Heart right ventricle (tissue), 16 donors: ENCODE measurements at regions of chr5 and their contacts with region 1.

Region 1: GRCh38 chr5:172283020-172283861 is at the start of gene UBTD2:
- DNase-seq: peak; percentile 86 to 89
- ATAC-seq: peak; percentile 73 to 92 (median 87)
- H3K4me3 ChIP-seq: peak within 1 kb of the TSS; percentile 56 to 97 (median 92)
- H3K27ac ChIP-seq: peak within 1 kb of the TSS; percentile 84 to 96 (median 94)
- H3K4me1 ChIP-seq: peaks cover 0 to 42% (median 24%) of the 10 kb centered on the region in 9 donors
- H3K27me3 ChIP-seq: no peaks in the 10 kb centered on the region
- CTCF ChIP-seq: peak; percentile 25 to 70 (median 56)
- total RNA-seq, gene UBTD2: 7.5 to 11.3 (median 9.1) TPM

Region 2: DNA sequence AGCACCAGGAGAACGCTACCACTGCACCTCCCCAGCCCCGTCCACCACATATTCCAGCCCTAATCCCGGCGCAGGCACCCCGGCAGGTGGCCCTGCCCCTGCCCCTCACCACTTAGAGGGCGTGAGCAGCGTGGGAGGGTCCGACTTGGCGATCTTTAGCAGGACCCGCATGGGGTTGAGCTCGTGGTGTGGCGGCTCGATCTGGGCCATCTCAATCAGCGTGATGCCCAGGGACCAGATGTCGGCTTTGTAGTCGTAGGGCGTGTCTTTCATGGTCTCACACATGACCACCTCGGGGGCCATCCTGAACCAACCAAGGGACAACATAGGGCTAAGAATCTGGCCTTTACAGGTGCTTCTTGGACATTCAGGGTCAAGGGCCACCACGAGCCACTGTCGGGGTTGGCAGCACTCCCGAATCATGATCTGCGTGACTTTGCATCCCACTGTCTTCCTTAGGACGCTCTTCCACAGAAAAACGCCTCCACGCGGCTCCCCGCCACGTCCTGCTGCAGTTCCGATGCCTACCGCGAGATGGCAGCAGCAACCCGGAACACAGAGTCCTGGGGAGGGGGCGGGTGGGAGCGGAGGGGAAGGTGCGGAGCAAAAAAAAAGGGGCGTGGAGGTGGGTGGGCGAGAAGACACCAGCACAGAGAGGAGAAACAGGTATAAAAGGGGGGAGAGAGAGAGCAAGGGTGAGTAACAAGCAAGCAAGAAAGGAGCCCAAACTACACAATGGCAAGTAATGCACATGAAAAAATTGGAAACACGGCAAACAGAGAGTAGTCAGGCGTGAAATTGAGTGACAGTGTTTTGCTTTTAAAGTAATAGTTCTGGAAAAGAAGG is 176.5 kb before region 1 on chr5:
- intact Hi-C with region 1: loop called in 4 of 10 experiments (anchors 2 to 5 kb)
- DNase-seq: peak in 1 of 2 donors; percentile 72
- ATAC-seq: peak in 6 of 8 donors; percentile 28 to 46 (median 38)
- H3K4me3 ChIP-seq: peak overlapping the region in 7 of 10 donors; percentile 6 to 39 (median 26)
- H3K27ac ChIP-seq: peak overlapping the region in 1 of 10 donors; percentile 58
- H3K4me1 ChIP-seq: peaks cover 15 to 74% (median 59%) of the 10 kb centered on the region in 9 donors
- H3K27me3 ChIP-seq: no peaks in the 10 kb centered on the region
- CTCF ChIP-seq: peak; percentile 89 to 98 (median 93)

Region 3: DNA sequence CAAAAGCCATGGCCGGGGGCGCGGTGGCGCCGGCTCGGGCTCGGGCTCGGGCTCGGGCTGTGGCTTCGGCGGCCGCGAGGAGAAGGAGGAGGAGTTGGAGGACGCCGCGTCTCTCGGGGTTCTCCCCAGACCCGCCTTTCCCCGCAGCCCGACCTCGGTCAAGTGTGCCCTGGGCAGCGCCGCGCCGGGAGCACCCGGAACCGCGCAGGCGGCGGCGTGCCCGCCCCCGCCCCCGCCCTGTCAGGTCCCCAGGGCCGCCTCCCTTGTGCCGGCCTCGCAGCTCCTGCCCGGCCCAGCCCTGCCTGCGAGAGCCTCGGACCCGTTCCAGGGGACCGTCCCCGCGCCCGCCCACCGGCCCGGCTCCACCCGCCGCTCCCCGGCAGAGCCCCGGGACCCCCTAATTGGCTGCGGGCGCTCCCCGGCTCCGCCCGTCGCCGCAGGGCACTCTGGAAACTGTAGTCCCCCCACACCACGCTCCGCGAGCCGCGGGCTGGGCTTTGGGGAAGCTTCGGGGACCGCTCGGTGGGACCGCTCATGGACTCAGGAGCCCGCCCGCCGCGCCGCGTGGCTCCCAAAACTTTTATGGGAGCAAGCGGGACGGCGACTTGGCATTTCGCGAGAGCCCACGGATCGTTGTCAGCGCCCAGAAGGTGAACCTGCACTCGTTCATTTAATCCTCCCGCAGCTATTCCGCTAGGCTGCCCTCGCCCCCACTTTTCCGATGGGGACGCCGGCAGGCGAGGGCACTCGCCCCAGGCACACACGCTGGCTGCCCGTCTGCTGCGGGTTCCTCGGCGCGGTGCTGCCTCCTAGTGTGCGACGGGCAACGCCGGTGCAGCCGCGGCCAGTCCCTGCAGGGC is 95.0 kb before region 1 on chr5 and contains the start of gene STK10:
- intact Hi-C with region 1: loop called in 6 of 10 experiments (anchors 1 to 10 kb)
- DNase-seq: peak; percentile 92 to 95
- ATAC-seq: peak; percentile 93 to 98 (median 96)
- H3K4me3 ChIP-seq: peak within 1 kb of the TSS; percentile 76 to 100 (median 96)
- H3K27ac ChIP-seq: peak within 1 kb of the TSS; percentile 66 to 99 (median 96)
- H3K4me1 ChIP-seq: peaks cover 0 to 44% (median 35%) of the 10 kb centered on the region in 9 donors
- H3K27me3 ChIP-seq: no peaks in the 10 kb centered on the region
- CTCF ChIP-seq: peak; percentile 82 to 98 (median 91)
- total RNA-seq, gene STK10: 5.6 to 22.3 (median 9.8) TPM

Region 4: GRCh38 chr5:172194985-172195774 is 88.1 kb before region 1 on chr5:
- intact Hi-C with region 1: loop called in 1 of 10 experiments (anchors 10 kb)
- DNase-seq: no peak
- ATAC-seq: no peak
- H3K4me3 ChIP-seq: no peak overlapping the region
- H3K27ac ChIP-seq: no peak overlapping the region
- H3K4me1 ChIP-seq: no peaks in the 10 kb centered on the region
- H3K27me3 ChIP-seq: no peaks in the 10 kb centered on the region
- CTCF ChIP-seq: no peak

Region 5: GRCh38 chr5:172216345-172216744 is 66.9 kb before region 1 on chr5:
- intact Hi-C with region 1: loop called in 1 of 10 experiments (anchors 10 kb)
- DNase-seq: no peak
- ATAC-seq: no peak
- H3K4me3 ChIP-seq: no peak overlapping the region
- H3K27ac ChIP-seq: no peak overlapping the region
- H3K4me1 ChIP-seq: no peaks in the 10 kb centered on the region
- H3K27me3 ChIP-seq: no peaks in the 10 kb centered on the region
- CTCF ChIP-seq: no peak

Region 6: DNA sequence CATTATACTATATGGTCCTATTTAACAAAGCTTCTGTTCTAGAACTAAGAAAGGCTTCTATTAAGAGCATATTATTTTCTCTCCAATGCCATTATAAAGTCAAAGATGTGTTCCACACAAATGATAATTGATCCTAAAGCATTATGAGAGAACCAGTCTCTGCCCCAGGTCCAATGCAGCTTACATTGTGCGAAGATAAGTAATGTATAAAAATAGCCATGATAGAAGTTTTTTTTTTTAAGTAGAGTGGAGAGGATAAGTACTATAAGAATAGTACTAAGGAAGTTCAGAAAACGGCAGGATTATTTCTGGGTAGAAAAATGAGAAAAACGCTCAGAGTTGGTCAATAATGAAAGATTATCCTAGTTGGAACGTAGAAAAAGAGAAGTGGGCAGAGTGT is 15.3 kb before region 1 on chr5:
- intact Hi-C with region 1: loop called in 1 of 10 experiments (anchors 1 kb)
- DNase-seq: no peak
- ATAC-seq: peak in 4 of 8 donors; percentile 55 to 82 (median 61)
- H3K4me3 ChIP-seq: no peak overlapping the region
- H3K27ac ChIP-seq: peak overlapping the region in 2 of 10 donors; percentile 2 to 4
- H3K4me1 ChIP-seq: peaks cover 9 to 45% (median 21%) of the 10 kb centered on the region in 9 donors
- H3K27me3 ChIP-seq: no peaks in the 10 kb centered on the region
- CTCF ChIP-seq: no peak

Region 7: DNA sequence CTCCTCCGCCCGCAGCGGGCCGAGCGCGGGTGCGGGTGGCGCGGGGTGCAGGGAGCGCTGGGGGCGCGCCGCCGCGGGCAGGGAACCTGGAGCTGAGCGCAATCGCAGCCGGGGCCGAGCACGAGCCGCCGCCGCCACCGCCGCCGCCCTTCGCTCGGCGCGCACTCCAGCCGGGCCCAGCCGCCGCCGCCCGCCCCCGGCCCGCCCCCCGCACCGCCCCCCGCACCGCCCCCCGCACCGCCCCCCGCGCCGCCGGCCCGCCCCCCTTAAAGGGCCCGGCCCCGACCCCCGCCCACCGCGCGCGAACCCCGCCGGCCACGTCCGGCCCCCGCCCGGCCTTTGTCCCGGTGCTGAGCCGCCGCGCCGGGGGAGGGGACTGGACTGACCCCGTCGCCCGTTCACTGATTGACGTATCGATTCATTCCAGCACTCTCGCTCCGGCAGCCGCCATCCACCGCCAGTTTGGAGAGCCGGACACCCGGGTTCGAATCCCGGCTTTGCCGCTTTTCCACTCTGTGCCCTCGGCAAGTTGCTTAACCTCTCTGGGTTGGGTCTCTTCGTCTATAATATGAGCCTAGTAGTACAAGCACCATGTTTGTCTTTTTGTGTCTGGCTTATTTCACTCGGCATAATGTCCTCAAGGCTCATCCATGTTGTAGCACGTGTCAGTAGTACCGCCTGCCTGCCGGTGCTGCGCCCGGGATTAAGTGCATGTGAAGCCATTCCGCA is 171.3 kb after region 1 on chr5 and contains the start of gene SH3PXD2B:
- intact Hi-C with region 1: loop called in 2 of 10 experiments (anchors 5 to 10 kb)
- DNase-seq: peak; percentile 66 to 69
- ATAC-seq: peak; percentile 28 to 72 (median 54)
- H3K4me3 ChIP-seq: peak within 1 kb of the TSS; percentile 67 to 94 (median 82)
- H3K27ac ChIP-seq: peak within 1 kb of the TSS; percentile 65 to 91 (median 83)
- H3K4me1 ChIP-seq: peaks cover 6 to 70% (median 46%) of the 10 kb centered on the region in 9 donors
- H3K27me3 ChIP-seq: peaks cover 0 to 25% (median 0%) of the 10 kb centered on the region in 7 donors
- CTCF ChIP-seq: no peak
- total RNA-seq, gene SH3PXD2B: 2.9 to 12.5 (median 5.9) TPM